ENCODE measurements at regions of chr11 and their contacts with region 1.

Region 1: DNA sequence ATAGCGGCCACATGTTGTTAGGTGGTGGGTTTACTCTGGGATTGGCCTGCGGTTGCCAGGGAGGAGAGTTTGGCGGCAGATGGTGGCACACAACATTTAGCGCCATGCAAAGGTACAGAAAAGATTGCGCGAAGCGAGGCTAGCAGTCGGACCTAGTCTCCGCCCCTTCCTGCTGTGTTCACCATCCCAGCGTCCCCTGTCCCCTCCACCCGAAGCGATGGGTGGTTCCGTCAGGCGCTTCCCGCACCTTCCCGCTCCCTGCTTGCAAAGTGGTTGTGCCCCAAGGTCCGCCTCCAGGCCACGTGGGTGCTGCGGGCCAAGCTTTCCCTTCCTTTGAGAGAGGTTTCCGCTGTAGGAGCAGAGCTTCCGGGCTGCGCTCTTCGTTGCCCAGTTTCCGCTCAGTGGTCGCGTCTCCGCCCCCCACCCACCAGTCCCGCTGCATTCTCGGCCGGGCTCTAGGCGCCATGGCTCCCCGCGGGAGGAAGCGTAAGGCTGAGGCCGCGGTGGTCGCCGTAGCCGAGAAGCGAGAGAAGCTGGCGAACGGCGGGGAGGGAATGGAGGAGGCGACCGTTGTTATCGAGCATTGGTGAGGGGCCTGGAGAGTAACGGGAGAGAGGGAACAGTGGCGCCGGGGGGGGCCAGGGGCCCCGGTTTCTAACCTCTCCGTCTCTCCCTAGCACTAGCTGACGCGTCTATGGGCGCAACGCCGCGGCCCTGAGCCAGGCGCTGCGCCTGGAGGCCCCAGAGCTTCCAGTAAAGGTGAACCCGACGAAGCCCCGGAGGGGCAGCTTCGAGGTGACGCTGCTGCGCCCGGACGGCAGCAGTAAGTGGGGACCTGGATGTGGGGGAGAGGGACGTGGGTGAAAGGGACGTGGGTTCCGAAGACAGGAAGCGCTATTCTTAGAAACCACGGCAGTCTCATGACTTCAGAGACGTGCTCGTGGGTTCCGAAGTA is at the start of gene SELENOH:
- DNase-seq: peak; percentile 84
- ATAC-seq: peak; percentile 94
- H3K4me3 ChIP-seq: peak within 1 kb of the TSS; percentile 58 to 78 (median 78)
- H3K27ac ChIP-seq: peak within 1 kb of the TSS; percentile 80
- H3K4me1 ChIP-seq: peaks cover 7% of the 10 kb centered on the region; the same call in 1 of the 2 replicates
- H3K27me3 ChIP-seq: no peaks in the 10 kb centered on the region
- CTCF ChIP-seq: peak; percentile 10; the same call in 1 of the 2 replicates
- EP300 ChIP-seq: no peak
- POLR2A ChIP-seq: peak; percentile 49 to 76
- RAD21 ChIP-seq: peak; percentile 53
- total RNA-seq, gene SELENOH: 70.2 and 77.4 TPM in 2 replicates

Region 2: GRCh38 chr11:57444362-57445121 is 296.9 kb before region 1 on chr11:
- CTCF ChIA-PET with region 1: no interaction called
- POLR2A ChIA-PET with region 1: no interaction called
- in situ Hi-C with region 1: no loop called
- intact Hi-C with region 1: no loop called
- DNase-seq: no peak
- ATAC-seq: no peak
- H3K4me3 ChIP-seq: no peak overlapping the region
- H3K27ac ChIP-seq: no peak overlapping the region
- H3K4me1 ChIP-seq: peaks cover 55% of the 10 kb centered on the region
- H3K27me3 ChIP-seq: no peaks in the 10 kb centered on the region
- CTCF ChIP-seq: no peak
- EP300 ChIP-seq: no peak
- POLR2A ChIP-seq: no peak
- RAD21 ChIP-seq: no peak

Region 3: DNA sequence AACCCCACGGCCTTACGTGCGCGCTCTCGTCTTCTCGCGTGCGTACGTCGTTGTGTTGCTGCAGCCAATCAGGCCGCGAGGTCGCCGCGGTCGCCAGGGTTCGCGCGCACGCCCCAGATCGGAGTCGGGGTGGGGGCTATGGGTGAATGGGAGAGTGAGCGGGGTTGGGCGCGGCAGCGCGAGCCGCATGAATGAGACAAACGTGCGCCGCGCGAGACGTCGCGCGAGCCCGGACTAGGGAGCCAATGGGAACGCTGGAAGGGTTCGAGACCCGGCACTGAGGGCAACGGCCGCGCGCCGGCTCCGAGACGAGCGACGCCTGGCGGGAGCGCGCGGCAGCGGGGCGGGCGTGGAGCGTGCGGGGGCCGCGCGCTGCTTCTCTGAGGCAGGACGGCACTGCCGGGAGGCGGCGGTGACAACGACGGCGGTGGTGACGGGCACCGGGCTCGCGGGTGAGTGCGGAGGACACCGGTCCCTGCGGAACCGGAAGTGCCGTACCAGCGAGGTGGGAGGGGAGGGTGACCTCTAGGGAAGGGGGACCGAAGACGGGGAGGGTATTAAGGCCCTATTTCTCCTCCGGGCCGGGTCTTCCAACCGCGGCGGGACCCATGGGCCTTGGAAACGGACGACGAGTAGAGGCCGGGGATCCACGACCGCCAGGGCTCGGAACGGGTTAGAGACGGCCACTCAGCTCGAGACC is 73.5 kb before region 1 on chr11 and contains the start of gene ZDHHC5:
- CTCF ChIA-PET with region 1: no interaction called
- POLR2A ChIA-PET with region 1: no interaction called
- in situ Hi-C with region 1: no loop called
- intact Hi-C with region 1: no loop called
- DNase-seq: peak; percentile 97
- ATAC-seq: peak; percentile 92
- H3K4me3 ChIP-seq: peak within 1 kb of the TSS; percentile 81 to 91 (median 88)
- H3K27ac ChIP-seq: peak within 1 kb of the TSS; percentile 98
- H3K4me1 ChIP-seq: peaks cover 35% of the 10 kb centered on the region
- H3K27me3 ChIP-seq: no peaks in the 10 kb centered on the region; a peak in 1 of 5 replicates
- CTCF ChIP-seq: peak; percentile 57; the same call in 1 of the 2 replicates
- EP300 ChIP-seq: no peak; a peak in 1 of 4 replicates
- POLR2A ChIP-seq: peak; percentile 59 to 88
- RAD21 ChIP-seq: peak; percentile 49; the same call in 1 of the 2 replicates
- total RNA-seq, gene ZDHHC5: 20.3 and 26.6 TPM in 2 replicates

Region 4: DNA sequence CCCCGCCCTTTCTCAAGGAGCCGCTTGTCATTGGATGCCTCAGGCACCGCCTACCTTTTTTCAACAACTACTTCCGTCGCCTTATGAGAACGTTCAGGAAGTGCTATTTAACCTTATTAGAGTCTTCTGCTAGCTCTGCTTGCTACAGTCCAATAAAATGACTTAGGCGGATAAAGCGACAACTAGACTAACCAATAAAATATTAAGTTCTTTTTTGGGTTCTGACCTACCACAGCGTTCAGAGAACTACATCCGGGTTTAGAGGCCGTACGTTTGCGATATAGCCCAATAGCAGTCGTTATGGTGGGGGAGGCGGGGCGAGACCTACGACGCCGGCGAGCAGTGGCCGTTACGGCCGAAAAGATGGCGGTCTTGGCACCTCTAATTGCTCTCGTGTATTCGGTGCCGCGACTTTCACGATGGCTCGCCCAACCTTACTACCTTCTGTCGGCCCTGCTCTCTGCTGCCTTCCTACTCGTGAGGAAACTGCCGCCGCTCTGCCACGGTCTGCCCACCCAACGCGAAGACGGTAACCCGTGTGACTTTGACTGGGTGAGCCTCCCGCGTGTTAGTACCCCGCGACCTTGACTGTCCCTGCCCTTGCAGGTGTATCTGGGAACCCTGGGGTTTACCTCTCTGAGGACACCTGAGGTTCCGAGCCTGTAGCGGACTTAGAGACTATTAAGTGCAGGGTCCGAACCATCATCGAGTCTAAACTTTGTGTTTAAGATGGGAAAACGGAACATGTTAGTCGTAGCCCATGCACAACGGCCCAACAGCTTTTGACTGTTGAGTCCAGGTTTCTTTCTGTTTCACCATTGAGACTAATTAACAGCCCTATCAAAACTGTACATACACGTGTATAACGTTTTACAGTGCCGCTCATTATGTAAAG is 28.9 kb before region 1 on chr11 and contains the start of gene TMX2:
- CTCF ChIA-PET with region 1: no interaction called
- POLR2A ChIA-PET with region 1: interaction called, 11 read pairs
- in situ Hi-C with region 1: no loop called
- intact Hi-C with region 1: no loop called
- DNase-seq: peak; percentile 100
- ATAC-seq: peak; percentile 95
- H3K4me3 ChIP-seq: peak within 1 kb of the TSS; percentile 92 to 98 (median 92)
- H3K27ac ChIP-seq: peak within 1 kb of the TSS; percentile 82
- H3K4me1 ChIP-seq: peaks cover 29% of the 10 kb centered on the region
- H3K27me3 ChIP-seq: no peaks in the 10 kb centered on the region; a peak in 1 of 5 replicates
- CTCF ChIP-seq: no peak
- EP300 ChIP-seq: no peak
- POLR2A ChIP-seq: peak; percentile 69 to 85
- RAD21 ChIP-seq: no peak
- total RNA-seq, gene TMX2: 67.0 and 129 TPM in 2 replicates

Region 5: DNA sequence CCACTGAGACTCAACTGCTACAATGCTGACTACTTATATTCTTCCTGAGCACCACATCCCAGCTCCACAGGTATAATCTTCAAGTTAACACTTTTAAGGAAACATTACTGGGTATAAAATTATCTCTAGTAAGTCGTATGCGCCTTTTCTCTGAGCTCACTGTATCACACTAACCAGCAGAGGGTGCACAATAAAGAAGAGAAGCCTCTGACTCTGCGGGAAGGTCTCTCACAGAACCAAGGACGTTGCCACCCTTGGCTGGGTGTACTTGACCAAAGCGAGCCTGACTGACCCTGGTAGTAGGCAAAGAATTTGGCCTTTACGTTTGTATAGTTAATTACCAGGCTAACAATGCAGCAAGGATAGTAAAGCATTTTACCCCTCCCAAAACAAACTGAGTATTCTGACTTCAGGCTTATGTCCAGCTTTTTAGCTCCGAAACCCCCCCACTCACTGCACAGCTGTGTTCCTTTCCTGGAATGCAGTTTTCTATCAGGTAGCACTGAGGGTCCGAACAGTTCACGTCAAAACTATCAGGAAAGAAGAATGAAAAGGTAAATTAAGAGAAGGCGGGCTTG is 10.4 kb after region 1 on chr11 and contains the start of gene BTBD18:
- CTCF ChIA-PET with region 1: no interaction called
- POLR2A ChIA-PET with region 1: interaction called, 11 read pairs
- in situ Hi-C with region 1: no loop called
- intact Hi-C with region 1: no loop called
- DNase-seq: peak; percentile 83
- ATAC-seq: peak; percentile 94
- H3K4me3 ChIP-seq: no peak within 1 kb of the TSS
- H3K27ac ChIP-seq: peak within 1 kb of the TSS; percentile 31
- H3K4me1 ChIP-seq: peaks cover 26% of the 10 kb centered on the region
- H3K27me3 ChIP-seq: no peaks in the 10 kb centered on the region
- CTCF ChIP-seq: peak; percentile 76
- EP300 ChIP-seq: no peak
- POLR2A ChIP-seq: no peak
- RAD21 ChIP-seq: peak; percentile 71
- total RNA-seq, gene BTBD18: not detected in 2 replicates

Region 6: GRCh38 chr11:57761301-57762234 is 20.2 kb after region 1 on chr11 and contains the start of gene CTNND1:
- CTCF ChIA-PET with region 1: no interaction called
- POLR2A ChIA-PET with region 1: interaction called, 13 read pairs
- in situ Hi-C with region 1: no loop called
- intact Hi-C with region 1: no loop called
- DNase-seq: peak; percentile 97
- ATAC-seq: peak; percentile 95
- H3K4me3 ChIP-seq: peak within 1 kb of the TSS; percentile 80 to 97 (median 88)
- H3K27ac ChIP-seq: peak within 1 kb of the TSS; percentile 99
- H3K4me1 ChIP-seq: peaks cover 49% of the 10 kb centered on the region
- H3K27me3 ChIP-seq: no peaks in the 10 kb centered on the region; a peak in 1 of 5 replicates
- CTCF ChIP-seq: no peak
- EP300 ChIP-seq: peak in 1 of 2 experiments; percentile 4; a peak in 1 of 4 replicates
- POLR2A ChIP-seq: peak; percentile 68 to 87
- RAD21 ChIP-seq: no peak
- total RNA-seq, gene CTNND1: 128 and 184 TPM in 2 replicates

Region 7: DNA sequence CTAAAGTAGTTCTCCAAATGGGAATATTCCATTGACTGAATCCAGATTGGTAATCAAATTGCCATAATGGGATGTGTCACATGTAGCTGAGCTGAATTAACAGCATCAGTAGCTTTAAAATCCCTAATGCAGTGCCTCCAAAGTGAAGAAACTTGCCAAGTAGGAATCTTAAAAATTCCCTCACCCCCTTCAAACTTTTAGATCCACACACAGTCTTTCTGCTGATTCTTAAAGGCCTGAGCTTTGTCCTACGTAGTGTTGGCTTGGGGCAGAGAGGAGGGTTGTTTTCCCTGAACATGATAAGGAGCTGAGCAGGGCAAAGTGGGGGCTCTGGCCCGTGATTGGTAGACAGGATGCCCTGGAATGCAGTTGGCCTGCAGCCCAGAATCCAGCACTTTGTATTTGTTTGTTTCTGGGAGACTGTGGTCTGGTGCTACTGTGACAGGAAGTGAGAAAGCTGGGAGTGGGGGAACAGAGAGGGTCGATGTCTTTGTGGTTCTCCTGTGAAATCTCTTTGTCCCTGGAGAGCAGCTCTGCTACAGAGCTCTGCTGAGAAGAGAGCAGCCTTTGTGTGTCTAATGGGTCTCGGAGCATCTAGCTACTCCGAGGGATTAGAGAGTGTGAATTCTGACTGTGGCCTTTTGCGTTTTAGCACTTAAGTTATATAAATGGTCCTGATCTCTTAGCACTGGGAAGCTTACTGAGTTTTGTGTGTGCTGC is 37.1 kb after region 1 on chr11:
- CTCF ChIA-PET with region 1: no interaction called
- POLR2A ChIA-PET with region 1: interaction called, 18 read pairs
- in situ Hi-C with region 1: no loop called
- intact Hi-C with region 1: no loop called
- DNase-seq: peak; percentile 99
- ATAC-seq: peak; percentile 95
- H3K4me3 ChIP-seq: peak overlapping the region; percentile 29 to 56 (median 43); a peak in 4 of 6 replicates
- H3K27ac ChIP-seq: peak overlapping the region; percentile 96
- H3K4me1 ChIP-seq: peaks cover 98% of the 10 kb centered on the region
- H3K27me3 ChIP-seq: no peaks in the 10 kb centered on the region
- CTCF ChIP-seq: no peak
- EP300 ChIP-seq: peak; percentile 87 to 96
- POLR2A ChIP-seq: peak; percentile 53 to 90; a peak in 3 of 4 replicates
- RAD21 ChIP-seq: peak; percentile 23; the same call in 1 of the 2 replicates

Region 8: DNA sequence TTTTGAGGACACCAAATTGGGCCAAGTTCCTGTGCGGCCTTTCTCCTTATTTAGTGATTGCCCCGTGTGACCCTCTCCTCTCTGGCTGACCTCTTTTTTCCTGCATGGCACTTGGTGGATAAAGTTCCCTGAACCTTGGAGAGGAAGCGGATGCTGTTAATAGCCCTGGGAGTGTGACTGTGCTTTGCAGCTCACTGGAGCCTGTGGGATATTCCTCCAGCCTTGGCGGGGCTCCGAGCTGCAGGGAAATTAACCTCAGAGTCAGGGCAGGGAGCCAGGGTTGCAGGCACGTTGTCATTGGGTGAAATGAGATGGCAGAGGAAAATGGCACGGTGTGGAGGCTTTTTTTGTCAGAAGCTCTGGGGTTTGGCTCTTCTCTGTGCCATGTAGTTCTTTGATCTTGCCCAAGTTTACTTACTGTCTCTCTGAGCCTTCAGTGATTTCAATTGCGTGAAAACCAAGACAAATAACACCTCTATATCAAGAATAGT is 283.2 kb after region 1 on chr11:
- CTCF ChIA-PET with region 1: no interaction called
- POLR2A ChIA-PET with region 1: no interaction called
- in situ Hi-C with region 1: no loop called
- intact Hi-C with region 1: no loop called
- DNase-seq: no peak
- ATAC-seq: peak; percentile 41; the same call in 2 of the 3 replicates
- H3K4me3 ChIP-seq: no peak overlapping the region
- H3K27ac ChIP-seq: no peak overlapping the region
- H3K4me1 ChIP-seq: peaks cover 46% of the 10 kb centered on the region
- H3K27me3 ChIP-seq: no peaks in the 10 kb centered on the region
- CTCF ChIP-seq: no peak
- EP300 ChIP-seq: no peak
- POLR2A ChIP-seq: no peak
- RAD21 ChIP-seq: no peak

Region 9: GRCh38 chr11:58046231-58046630 is 304.8 kb after region 1 on chr11:
- CTCF ChIA-PET with region 1: no interaction called
- POLR2A ChIA-PET with region 1: no interaction called
- in situ Hi-C with region 1: no loop called
- intact Hi-C with region 1: no loop called
- DNase-seq: no peak
- ATAC-seq: no peak
- H3K4me3 ChIP-seq: no peak overlapping the region
- H3K27ac ChIP-seq: no peak overlapping the region
- H3K4me1 ChIP-seq: peaks cover 10% of the 10 kb centered on the region; the same call in 1 of the 2 replicates
- H3K27me3 ChIP-seq: no peaks in the 10 kb centered on the region
- CTCF ChIP-seq: no peak
- EP300 ChIP-seq: no peak
- POLR2A ChIP-seq: no peak
- RAD21 ChIP-seq: no peak

Region 10: DNA sequence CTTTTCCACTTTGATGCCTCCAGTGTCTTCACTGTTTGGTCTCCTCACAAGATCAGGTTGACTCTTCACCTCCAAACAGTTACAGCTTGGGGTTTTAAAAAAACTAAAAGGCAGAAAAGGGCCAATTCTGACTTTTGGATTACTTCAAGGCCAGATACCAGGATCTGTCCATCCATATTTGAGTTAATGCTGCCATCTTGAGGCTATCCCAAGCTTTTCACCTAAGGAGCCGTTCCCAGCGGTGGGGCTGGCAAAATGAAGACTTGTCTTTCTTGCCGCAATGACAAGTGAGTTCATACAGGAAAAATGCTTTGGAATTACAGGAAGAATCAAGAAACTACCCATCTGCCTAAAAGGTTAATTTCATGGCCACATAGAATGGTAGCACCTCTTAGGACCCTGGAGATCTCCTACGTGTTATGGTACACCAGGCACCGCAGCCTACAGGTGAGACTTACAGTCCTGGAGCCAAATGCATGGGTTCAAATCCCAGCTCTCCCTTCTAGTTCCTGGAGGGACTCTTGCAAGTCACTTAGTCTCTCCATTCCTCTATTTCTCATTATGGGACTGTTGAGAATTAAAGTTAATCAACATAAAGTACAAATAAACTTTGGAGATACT is 772.4 kb after region 1 on chr11:
- CTCF ChIA-PET with region 1: no interaction called
- POLR2A ChIA-PET with region 1: no interaction called
- in situ Hi-C with region 1: loop called (anchors 10 kb)
- intact Hi-C with region 1: no loop called
- DNase-seq: peak; percentile 51
- ATAC-seq: peak; percentile 87
- H3K4me3 ChIP-seq: no peak overlapping the region
- H3K27ac ChIP-seq: no peak overlapping the region
- H3K4me1 ChIP-seq: peaks cover 12% of the 10 kb centered on the region
- H3K27me3 ChIP-seq: peaks cover 0 to 5% of the 10 kb centered on the region in 2 experiments; a peak in 1 of 5 replicates
- CTCF ChIP-seq: peak; percentile 82
- EP300 ChIP-seq: no peak
- POLR2A ChIP-seq: no peak
- RAD21 ChIP-seq: peak; percentile 37; the same call in 1 of the 2 replicates

Measured in HepG2 (cell line).